IMR-90 (cell line): ENCODE measurements at regions of chr11 and their contacts with region 1.

Region 1: DNA sequence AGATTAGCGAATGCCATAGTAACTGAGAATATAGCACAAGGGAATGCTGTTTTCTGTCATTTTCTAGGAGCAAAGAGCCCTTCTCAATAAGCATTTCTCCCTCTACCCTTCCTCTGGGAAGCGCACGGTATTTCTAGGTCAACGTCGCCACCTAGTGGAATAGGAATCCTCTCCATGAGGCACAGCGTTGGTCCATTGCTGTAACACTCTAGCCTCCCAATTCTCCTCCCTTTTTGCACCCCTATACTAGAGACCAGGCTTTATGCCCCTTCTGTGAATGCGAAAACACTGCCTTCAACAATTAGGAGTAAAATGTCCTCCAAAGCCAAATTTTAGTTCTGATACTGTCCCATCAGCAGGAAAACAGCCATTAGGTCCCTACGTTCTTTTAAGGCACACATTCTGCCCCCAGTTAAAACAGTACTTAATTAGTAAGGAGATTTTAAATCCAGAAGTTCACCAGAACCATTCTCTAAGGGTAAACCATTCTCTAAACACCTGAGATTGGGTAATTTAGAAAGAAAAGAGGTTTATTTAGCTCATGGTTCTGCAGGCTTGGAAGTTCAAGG is 12.8 kb upstream of the HYLS1 start:
- DNase-seq: peak; percentile 70
- ATAC-seq: peak; percentile 98
- H3K4me3 ChIP-seq: no peak overlapping the region
- H3K27ac ChIP-seq: no peak overlapping the region
- H3K4me1 ChIP-seq: no peaks in the 10 kb centered on the region
- H3K27me3 ChIP-seq: peaks cover 2% of the 10 kb centered on the region
- CTCF ChIP-seq: peak; percentile 82
- POLR2A ChIP-seq: no peak
- RAD21 ChIP-seq: peak; percentile 84

Region 2: DNA sequence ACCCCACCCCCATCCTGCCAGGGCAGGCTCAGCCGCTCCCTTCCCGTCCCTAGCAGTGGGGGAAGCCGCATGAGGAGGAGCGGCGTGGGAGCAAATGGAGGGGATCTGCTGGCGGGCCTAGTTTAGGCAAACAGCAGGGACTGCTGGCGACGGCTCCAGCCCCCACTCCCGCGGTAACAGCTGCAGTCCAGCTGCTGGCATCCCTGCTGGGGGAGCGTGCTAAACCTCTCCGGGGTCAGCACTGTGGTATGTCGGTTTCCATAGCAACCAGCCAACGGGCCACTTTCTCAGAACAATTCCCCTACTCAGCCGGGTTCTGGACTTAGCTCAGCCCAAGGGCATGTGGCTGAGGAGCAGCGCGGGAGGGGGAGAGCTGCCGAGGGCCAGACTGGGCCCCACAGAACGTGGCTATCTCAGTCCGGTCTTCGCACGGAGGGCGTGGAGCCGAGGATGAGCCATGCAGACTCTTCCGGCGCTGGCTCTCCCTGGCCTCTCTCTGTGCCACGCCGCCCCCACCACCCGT is 611.3 kb before region 1 on chr11:
- CTCF ChIA-PET with region 1: no interaction called
- POLR2A ChIA-PET with region 1: no interaction called
- dilution Hi-C with region 1: no loop called
- in situ Hi-C with region 1: no loop called
- intact Hi-C with region 1: loop called (anchors 5 kb)
- DNase-seq: peak; percentile 100
- ATAC-seq: peak; percentile 93
- H3K4me3 ChIP-seq: no peak overlapping the region
- H3K27ac ChIP-seq: peak overlapping the region; percentile 93
- H3K4me1 ChIP-seq: peaks cover 32% of the 10 kb centered on the region
- H3K27me3 ChIP-seq: no peaks in the 10 kb centered on the region
- CTCF ChIP-seq: no peak
- POLR2A ChIP-seq: peak; percentile 48; the same call in 1 of the 2 replicates
- RAD21 ChIP-seq: peak; percentile 10

Region 3: DNA sequence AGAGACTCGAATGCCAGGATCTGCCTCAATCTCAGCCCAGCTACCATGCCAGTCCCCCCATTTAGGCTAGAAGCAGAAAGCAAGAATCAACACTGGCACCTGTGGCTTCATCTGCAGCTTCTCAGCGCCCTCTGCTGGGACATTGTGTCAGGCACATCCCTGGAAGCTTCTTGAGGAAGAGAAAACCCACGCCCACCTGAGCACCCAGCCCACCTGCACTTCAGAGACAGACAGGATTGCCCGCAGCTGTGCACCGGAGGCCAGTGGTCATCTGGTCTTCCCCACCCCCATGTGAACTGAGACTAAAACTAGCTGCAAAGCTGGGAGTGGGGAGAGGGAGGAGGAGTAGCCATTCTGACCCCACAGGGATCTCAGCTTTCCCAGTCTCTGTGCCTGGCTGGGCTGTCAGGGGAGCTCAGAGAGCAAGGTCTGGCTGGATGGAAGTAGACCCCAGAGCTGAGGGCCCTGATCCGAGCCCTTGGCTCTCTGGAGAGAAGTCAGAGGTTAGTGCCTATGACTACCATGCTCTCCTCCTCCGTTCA is 445.4 kb before region 1 on chr11:
- CTCF ChIA-PET with region 1: no interaction called
- POLR2A ChIA-PET with region 1: no interaction called
- dilution Hi-C with region 1: no loop called
- in situ Hi-C with region 1: loop called (anchors 10 kb)
- intact Hi-C with region 1: loop called (anchors 2 kb)
- DNase-seq: peak; percentile 55
- ATAC-seq: peak; percentile 78
- H3K4me3 ChIP-seq: no peak overlapping the region
- H3K27ac ChIP-seq: no peak overlapping the region
- H3K4me1 ChIP-seq: no peaks in the 10 kb centered on the region
- H3K27me3 ChIP-seq: peaks cover 10% of the 10 kb centered on the region
- CTCF ChIP-seq: peak; percentile 74
- POLR2A ChIP-seq: no peak
- RAD21 ChIP-seq: peak; percentile 75

Region 4: DNA sequence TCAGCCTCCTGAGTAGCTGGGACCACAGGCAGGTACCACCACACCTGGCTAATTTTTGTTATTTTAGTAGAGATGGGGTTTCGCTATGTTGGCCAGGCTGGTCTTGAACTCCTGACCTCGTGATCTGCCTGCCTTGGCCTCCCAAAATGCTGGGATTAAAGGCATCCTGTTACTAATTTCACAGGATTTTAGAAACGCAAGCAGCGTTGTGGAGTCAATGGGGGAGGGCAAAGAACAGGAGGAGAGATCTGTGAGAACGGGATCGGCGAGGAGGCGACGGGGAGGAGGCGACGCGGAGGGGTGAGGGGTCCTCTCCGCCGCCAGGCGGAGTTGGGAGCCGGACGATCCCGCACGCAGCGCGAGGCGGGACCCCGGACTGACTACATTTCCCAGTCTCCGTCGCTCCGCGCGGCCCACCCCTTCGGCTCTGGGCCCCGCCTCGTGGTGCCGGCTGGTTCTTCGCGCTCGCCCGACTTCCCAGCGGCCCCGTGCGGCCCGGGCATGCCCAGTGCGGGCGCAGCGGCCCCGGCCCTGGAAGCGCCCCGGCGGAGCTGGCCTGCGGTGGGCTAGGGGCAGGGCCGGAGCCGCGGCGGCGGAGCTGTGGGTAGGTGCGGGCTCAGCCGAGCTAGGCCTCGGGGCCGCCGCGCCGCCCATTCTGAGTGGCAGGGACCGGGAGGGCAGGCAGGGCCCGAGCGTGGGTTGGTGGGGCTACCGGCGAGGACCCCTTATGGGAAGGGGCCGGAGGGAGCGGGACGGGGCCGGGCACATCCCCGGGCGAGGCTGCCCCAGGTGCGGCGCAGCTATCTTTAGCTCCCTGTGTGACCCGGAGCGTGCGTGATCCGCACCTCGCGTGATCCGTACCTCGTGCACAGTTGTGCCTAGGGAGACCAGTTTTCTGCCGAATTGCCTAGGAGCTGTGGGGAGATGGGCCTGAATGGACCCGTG is 305.4 kb before region 1 on chr11 and contains the start of gene EI24:
- CTCF ChIA-PET with region 1: no interaction called
- POLR2A ChIA-PET with region 1: no interaction called
- dilution Hi-C with region 1: no loop called
- in situ Hi-C with region 1: no loop called
- intact Hi-C with region 1: loop called (anchors 5 kb)
- DNase-seq: peak; percentile 90
- ATAC-seq: peak; percentile 98
- H3K4me3 ChIP-seq: peak within 1 kb of the TSS; percentile 99
- H3K27ac ChIP-seq: peak within 1 kb of the TSS; percentile 76
- H3K4me1 ChIP-seq: peaks cover 12% of the 10 kb centered on the region
- H3K27me3 ChIP-seq: no peaks in the 10 kb centered on the region; the same call in 1 of the 2 replicates
- CTCF ChIP-seq: peak; percentile 70
- POLR2A ChIP-seq: peak; percentile 71
- RAD21 ChIP-seq: peak; percentile 48
- total RNA-seq, gene EI24: 95.9 and 122 TPM in 2 replicates

Region 5: DNA sequence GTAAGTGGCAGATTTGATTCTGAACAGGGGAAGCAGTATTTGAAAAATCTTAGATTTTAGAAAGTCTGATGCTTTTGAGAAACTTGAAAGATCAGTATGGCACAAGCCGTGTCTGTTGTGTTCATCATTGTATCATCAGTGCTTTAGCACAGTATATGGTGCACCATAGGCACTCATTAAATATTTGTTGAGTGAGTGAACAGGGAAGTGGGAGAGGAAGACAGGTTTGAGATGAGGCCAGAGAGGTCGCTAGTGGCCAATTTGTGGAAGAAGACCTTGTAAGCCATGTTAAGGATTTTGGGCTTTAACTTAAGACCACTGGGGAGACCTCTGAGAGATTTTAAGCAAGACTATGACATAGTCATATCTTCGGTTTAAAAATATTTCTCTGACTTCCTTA is 236.8 kb before region 1 on chr11:
- CTCF ChIA-PET with region 1: no interaction called
- POLR2A ChIA-PET with region 1: no interaction called
- dilution Hi-C with region 1: no loop called
- in situ Hi-C with region 1: no loop called
- intact Hi-C with region 1: no loop called
- DNase-seq: no peak
- ATAC-seq: no peak
- H3K4me3 ChIP-seq: no peak overlapping the region
- H3K27ac ChIP-seq: no peak overlapping the region
- H3K4me1 ChIP-seq: no peaks in the 10 kb centered on the region
- H3K27me3 ChIP-seq: no peaks in the 10 kb centered on the region
- CTCF ChIP-seq: no peak
- POLR2A ChIP-seq: no peak
- RAD21 ChIP-seq: no peak

Region 6: GRCh38 chr11:125724125-125724524 is 150.5 kb before region 1 on chr11:
- CTCF ChIA-PET with region 1: no interaction called
- POLR2A ChIA-PET with region 1: no interaction called
- dilution Hi-C with region 1: no loop called
- in situ Hi-C with region 1: no loop called
- intact Hi-C with region 1: loop called (anchors 1 kb)
- DNase-seq: peak; percentile 4
- ATAC-seq: no peak
- H3K4me3 ChIP-seq: no peak overlapping the region
- H3K27ac ChIP-seq: no peak overlapping the region
- H3K4me1 ChIP-seq: no peaks in the 10 kb centered on the region
- H3K27me3 ChIP-seq: peaks cover 2% of the 10 kb centered on the region; the same call in 1 of the 2 replicates
- CTCF ChIP-seq: no peak
- POLR2A ChIP-seq: no peak
- RAD21 ChIP-seq: no peak